Activated B cell treated with CpG ODN at 0.5 μM for 24 hours (primary cell): ENCODE measurements at regions of chr1 and their contacts with region 1.

Region 1: DNA sequence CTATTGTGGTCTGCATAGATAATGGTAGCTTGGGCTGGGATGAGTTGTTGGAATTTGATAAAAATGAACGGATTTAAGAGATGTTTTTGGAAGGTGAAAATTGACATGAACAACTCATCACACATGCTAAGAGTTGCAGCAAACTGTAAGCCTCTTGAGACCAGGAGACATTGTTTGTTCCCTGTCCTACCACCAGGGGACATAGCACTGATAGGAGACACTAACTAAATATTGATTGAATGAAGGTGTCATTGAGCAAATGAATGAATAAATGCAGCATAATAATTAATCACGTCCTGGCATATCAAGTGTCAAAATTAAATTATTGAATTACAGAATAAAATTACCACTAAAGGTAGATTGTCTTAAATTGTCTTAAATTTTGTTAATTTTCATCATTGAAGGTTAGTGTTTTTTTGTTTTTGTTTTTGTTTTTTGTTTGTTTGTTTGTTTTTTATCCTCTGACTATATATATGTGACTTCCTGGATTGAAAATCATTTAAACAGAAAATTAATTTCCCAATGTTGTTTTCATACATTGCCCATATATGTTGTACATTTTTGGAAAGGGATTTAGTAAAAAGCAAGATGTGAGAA is 285.3 kb upstream of the C1orf105 start:
- DNase-seq: no peak
- ATAC-seq: peak; percentile 49
- H3K4me3 Mint-ChIP-seq: no peak overlapping the region
- H3K27ac Mint-ChIP-seq: no peak overlapping the region
- H3K4me1 Mint-ChIP-seq: peaks cover 5% of the 10 kb centered on the region
- H3K27me3 Mint-ChIP-seq: no peaks in the 10 kb centered on the region
- CTCF ChIP-seq: no peak

Region 2: DNA sequence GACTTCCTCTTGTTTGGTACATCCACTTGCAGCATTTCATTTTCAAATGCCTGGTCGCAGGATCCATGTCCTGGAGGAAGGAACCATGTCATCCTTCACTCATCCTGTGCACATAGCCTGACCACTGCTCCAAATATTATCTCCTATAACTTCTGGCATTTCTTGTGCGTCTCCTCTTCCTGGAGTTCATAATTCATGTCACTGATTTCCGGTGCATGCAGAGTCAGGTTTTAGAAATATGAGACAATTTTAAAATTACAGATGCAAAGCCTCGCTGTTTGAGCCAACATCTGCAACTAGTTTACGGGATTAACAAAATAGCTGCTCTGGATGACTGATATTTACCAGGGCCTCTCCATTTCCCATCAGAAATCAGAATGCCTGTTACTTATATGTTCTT is 25.8 kb before region 1 on chr1:
- CTCF ChIA-PET with region 1: no interaction called
- POLR2A ChIA-PET with region 1: no interaction called
- intact Hi-C with region 1: no loop called
- DNase-seq: no peak
- ATAC-seq: no peak
- H3K4me3 Mint-ChIP-seq: no peak overlapping the region
- H3K27ac Mint-ChIP-seq: no peak overlapping the region
- H3K4me1 Mint-ChIP-seq: no peaks in the 10 kb centered on the region
- H3K27me3 Mint-ChIP-seq: peaks cover 3% of the 10 kb centered on the region
- CTCF ChIP-seq: no peak

Region 3: DNA sequence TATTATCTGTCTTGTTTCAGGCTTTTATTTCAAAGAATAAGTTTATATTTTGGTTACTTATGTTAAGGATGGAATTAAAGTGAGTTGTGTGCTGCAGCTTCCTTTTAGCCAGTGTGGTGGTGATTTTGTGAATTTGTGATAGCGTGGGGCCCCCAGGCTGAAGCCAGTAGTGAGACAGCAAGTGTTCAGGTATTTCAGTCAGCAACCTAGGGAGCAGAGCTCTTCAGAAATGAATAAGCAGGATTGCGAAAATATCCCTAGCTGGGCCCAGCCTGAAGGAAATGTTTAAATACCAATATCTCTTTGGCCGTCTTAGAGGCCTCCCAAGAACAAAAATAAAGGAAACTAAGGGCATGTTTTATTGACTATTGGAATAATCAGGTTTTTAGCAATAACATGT is 134.5 kb after region 1 on chr1:
- CTCF ChIA-PET with region 1: no interaction called
- POLR2A ChIA-PET with region 1: no interaction called
- intact Hi-C with region 1: loop called (anchors 5 kb)
- DNase-seq: no peak
- ATAC-seq: no peak
- H3K4me3 Mint-ChIP-seq: no peak overlapping the region
- H3K27ac Mint-ChIP-seq: no peak overlapping the region
- H3K4me1 Mint-ChIP-seq: peaks cover 4% of the 10 kb centered on the region
- H3K27me3 Mint-ChIP-seq: no peaks in the 10 kb centered on the region
- CTCF ChIP-seq: no peak